ENCODE measurements at regions of chr2 and their contacts with region 1.

Region 1: DNA sequence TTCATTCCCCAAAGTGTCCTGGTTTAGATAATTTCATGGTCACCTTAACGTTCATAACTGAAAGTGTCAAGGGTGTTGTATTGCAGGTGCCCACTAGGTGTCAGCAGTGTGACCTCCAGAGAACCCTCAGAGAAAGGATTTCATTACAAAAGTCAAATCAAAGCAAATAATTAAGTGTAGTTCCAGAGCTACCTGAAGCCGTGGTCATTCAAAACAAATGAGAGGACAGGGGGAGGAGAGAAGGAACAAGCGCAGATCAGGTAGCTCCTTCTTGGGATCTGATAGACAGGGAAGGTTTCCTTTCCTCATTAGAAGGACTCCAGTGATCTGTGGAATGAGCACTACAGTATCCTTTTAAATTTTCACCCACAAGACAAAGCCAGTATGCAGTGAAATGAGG is at the start of gene SLC9A4:
- DNase-seq: peak; percentile 38 to 67 (median 59)
- H3K4me3 ChIP-seq: no peak within 1 kb of the TSS
- H3K27ac ChIP-seq: no peak within 1 kb of the TSS
- H3K4me1 ChIP-seq: no peaks in the 10 kb centered on the region
- H3K27me3 ChIP-seq: peaks cover 0 to 21% (median 4%) of the 10 kb centered on the region in 5 experiments

Region 2: GRCh38 chr2:102461188-102461587 is 11.8 kb before region 1 on chr2:
- CTCF ChIA-PET with region 1: interaction called, 10 read pairs
- POLR2A ChIA-PET with region 1: no interaction called
- DNase-seq: no peak
- H3K4me3 ChIP-seq: no peak overlapping the region
- H3K27ac ChIP-seq: no peak overlapping the region
- H3K4me1 ChIP-seq: no peaks in the 10 kb centered on the region
- H3K27me3 ChIP-seq: peaks cover 0 to 2% (median 0%) of the 10 kb centered on the region in 5 experiments

Region 3: GRCh38 chr2:102487761-102488466 is 14.9 kb after region 1 on chr2:
- CTCF ChIA-PET with region 1: interaction called, 39 read pairs
- POLR2A ChIA-PET with region 1: no interaction called
- DNase-seq: peak; percentile 47 to 87 (median 84)
- H3K4me3 ChIP-seq: peak overlapping the region in 1 of 7 experiments; percentile 16
- H3K27ac ChIP-seq: no peak overlapping the region
- H3K4me1 ChIP-seq: peaks cover 22 to 41% (median 24%) of the 10 kb centered on the region in 4 experiments
- H3K27me3 ChIP-seq: peaks cover 0 to 46% (median 14%) of the 10 kb centered on the region in 5 experiments

Region 4: GRCh38 chr2:102615622-102616436 is 142.8 kb after region 1 on chr2:
- CTCF ChIA-PET with region 1: interaction called, 111 read pairs
- POLR2A ChIA-PET with region 1: no interaction called
- DNase-seq: peak; percentile 54 to 81 (median 77)
- H3K4me3 ChIP-seq: no peak overlapping the region
- H3K27ac ChIP-seq: no peak overlapping the region
- H3K4me1 ChIP-seq: peaks cover 0 to 21% (median 18%) of the 10 kb centered on the region in 4 experiments
- H3K27me3 ChIP-seq: peaks cover 16 to 59% (median 29%) of the 10 kb centered on the region in 5 experiments

Region 5: DNA sequence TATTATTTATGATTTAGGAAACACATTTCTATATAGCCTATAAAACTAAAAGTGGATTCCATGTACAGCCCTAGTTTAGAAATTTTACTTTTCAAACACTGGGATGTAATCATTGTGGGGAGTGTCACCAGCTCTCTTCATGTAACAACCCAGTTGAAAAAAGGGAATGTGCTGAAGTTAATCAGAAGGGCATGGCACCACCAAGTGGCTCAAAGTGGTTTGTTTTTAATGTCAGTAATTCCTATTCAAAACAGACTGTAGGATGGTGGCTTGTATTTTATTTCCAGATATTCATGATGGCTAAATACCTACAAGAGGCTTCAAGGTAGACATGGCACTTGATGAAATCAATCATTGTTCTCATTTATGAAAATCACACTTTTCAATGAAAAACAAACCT is 230.7 kb after region 1 on chr2:
- CTCF ChIA-PET with region 1: interaction called, 37 read pairs
- POLR2A ChIA-PET with region 1: no interaction called
- DNase-seq: peak; percentile 31 to 67 (median 61)
- H3K4me3 ChIP-seq: no peak overlapping the region
- H3K27ac ChIP-seq: no peak overlapping the region
- H3K4me1 ChIP-seq: no peaks in the 10 kb centered on the region
- H3K27me3 ChIP-seq: peaks cover 0 to 11% (median 0%) of the 10 kb centered on the region in 5 experiments